ENCODE measurements at regions of chr17 and their contacts with region 1.

Region 1: DNA sequence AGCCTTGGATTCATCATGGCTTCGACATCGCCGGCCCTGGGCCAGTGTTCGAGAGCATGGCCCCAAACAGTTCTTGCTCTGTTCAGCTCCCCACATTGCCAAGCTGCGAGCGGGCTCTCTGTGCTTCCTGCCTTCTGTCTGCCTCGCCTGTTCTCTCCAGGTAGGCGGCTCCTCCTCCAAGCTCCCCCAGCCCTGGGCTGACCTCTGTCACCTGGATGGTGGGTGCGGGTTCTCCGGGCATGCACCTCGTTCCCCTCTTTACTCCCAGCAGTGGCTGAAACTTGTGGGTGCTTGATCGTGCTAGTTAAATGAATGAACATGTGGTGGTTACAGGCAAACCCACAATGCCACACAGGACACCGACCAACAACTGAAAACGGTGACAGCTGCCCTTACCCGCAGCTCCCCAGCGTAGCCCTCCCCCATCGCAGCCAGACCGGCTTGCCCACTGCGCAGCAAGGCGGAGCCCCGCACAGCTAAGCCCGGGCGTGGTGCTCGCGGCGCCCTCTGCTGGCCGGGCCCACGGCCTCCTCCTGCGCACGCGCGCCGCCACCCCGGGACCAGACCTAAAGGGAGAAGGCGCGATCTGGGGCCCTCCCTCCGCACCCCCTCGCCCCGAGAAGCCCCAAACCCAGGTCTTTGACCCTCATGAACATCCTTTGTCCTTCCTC is 23.0 kb upstream of the EIF1 start:
- DNase-seq: peak; percentile 96
- H3K4me3 ChIP-seq: peak overlapping the region; percentile 44 to 58
- H3K27ac ChIP-seq: peak overlapping the region; percentile 49 to 77
- H3K4me1 ChIP-seq: peaks cover 4 to 14% of the 10 kb centered on the region in 2 experiments; a peak in 2 of 4 replicates
- H3K27me3 ChIP-seq: no peaks in the 10 kb centered on the region; the same call in 1 of the 2 replicates
- CTCF ChIP-seq: peak; percentile 89
- EP300 ChIP-seq: no peak
- RAD21 ChIP-seq: peak; percentile 29; the same call in 1 of the 2 replicates

Region 2: DNA sequence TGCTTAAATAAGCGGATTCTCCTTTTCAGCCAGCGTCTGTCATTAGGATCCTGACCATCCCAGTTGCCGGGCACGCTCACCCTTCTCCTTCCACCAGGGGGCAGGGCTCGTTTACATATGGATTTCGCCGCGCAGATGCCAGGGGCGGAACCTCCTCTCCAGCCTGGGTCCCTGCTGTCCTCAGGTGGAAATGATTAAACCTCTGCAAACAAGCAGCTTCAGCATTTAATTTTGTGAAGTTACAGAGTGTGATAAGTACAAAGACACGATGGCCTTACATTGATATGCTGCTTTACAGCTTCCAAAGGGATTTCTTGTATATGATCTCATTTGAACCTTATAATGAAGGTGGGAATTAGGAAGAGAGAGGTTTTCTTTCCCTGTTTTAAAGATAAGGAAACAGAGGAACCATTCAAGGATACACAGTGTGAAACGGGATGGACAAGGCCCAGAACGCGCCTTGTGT is 862.1 kb before region 1 on chr17:
- CTCF ChIA-PET with region 1: interaction called, 44 read pairs
- POLR2A ChIA-PET with region 1: no interaction called
- DNase-seq: peak; percentile 86
- H3K4me3 ChIP-seq: no peak overlapping the region; a peak in 1 of 4 replicates
- H3K27ac ChIP-seq: no peak overlapping the region
- H3K4me1 ChIP-seq: peaks cover 0 to 2% of the 10 kb centered on the region in 2 experiments; a peak in 1 of 4 replicates
- H3K27me3 ChIP-seq: peaks cover 52% of the 10 kb centered on the region
- CTCF ChIP-seq: peak; percentile 94
- EP300 ChIP-seq: no peak
- RAD21 ChIP-seq: peak; percentile 89

Region 3: DNA sequence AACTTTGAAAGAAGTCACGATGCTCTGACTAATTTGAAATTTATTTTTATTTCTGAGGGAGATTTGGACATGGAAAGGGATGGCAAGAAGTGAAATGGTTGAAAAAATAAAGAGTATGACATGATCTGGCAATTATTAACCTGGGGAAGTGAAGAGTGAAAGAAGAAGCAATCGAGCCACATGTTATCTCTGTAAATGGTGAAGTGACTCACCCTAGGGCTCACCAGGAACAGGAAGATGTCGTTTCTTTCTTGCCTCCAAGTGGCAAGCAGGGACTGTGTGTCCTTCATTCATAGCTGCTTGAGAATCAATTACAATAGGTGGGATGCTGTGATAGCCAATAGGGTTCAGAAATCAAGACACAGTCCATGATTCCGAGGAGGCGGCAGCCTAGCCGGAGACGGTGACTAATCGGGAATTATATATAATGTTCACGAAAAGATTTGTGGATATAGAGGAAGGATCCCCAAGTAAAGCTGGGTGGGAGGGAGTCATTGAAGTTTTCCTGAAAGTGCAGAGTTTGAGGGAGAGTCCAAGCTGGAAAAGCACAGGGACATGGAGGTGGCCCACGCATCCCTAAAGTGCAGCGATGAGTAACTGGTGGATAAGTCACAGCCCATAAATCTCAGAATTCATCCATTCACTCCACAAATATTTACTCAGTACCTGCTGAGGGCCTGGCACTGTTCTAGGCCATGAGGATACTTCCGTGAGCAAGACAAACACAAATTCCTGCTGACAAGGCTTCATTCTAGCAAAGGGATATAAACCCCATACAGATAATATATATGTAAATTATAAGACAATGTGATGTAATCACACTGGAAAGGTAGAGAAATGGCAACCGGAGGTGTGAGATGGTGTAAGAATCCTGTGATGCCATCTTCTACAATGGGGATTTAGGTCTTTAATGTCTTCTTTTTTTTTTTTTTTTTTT is 762.3 kb before region 1 on chr17:
- CTCF ChIA-PET with region 1: interaction called, 42 read pairs
- POLR2A ChIA-PET with region 1: no interaction called
- DNase-seq: no peak
- H3K4me3 ChIP-seq: peak overlapping the region in 1 of 2 experiments; percentile 56; a peak in 2 of 4 replicates
- H3K27ac ChIP-seq: peak overlapping the region in 1 of 2 experiments; percentile 40; a peak in 1 of 4 replicates
- H3K4me1 ChIP-seq: peaks cover 0 to 14% of the 10 kb centered on the region in 2 experiments; a peak in 2 of 4 replicates
- H3K27me3 ChIP-seq: peaks cover 37% of the 10 kb centered on the region; the same call in 1 of the 2 replicates
- CTCF ChIP-seq: no peak
- EP300 ChIP-seq: no peak
- RAD21 ChIP-seq: no peak

Region 4: GRCh38 chr17:41329281-41329948 is 336.3 kb before region 1 on chr17:
- CTCF ChIA-PET with region 1: interaction called, 17 read pairs
- POLR2A ChIA-PET with region 1: no interaction called
- DNase-seq: peak; percentile 70
- H3K4me3 ChIP-seq: no peak overlapping the region
- H3K27ac ChIP-seq: no peak overlapping the region
- H3K4me1 ChIP-seq: no peaks in the 10 kb centered on the region
- H3K27me3 ChIP-seq: no peaks in the 10 kb centered on the region
- CTCF ChIP-seq: peak; percentile 70
- EP300 ChIP-seq: no peak
- RAD21 ChIP-seq: peak; percentile 65

Region 5: GRCh38 chr17:41567317-41567716 is 98.4 kb before region 1 on chr17:
- CTCF ChIA-PET with region 1: interaction called, 18 read pairs
- POLR2A ChIA-PET with region 1: no interaction called
- DNase-seq: no peak
- H3K4me3 ChIP-seq: no peak overlapping the region
- H3K27ac ChIP-seq: no peak overlapping the region
- H3K4me1 ChIP-seq: no peaks in the 10 kb centered on the region
- H3K27me3 ChIP-seq: peaks cover 35% of the 10 kb centered on the region; the same call in 1 of the 2 replicates
- CTCF ChIP-seq: no peak
- EP300 ChIP-seq: no peak
- RAD21 ChIP-seq: no peak

Region 6: GRCh38 chr17:41602524-41602923 is 63.2 kb before region 1 on chr17:
- CTCF ChIA-PET with region 1: interaction called, 13 read pairs
- POLR2A ChIA-PET with region 1: no interaction called
- DNase-seq: no peak
- H3K4me3 ChIP-seq: no peak overlapping the region
- H3K27ac ChIP-seq: no peak overlapping the region
- H3K4me1 ChIP-seq: peaks cover 0 to 3% of the 10 kb centered on the region in 2 experiments; a peak in 1 of 4 replicates
- H3K27me3 ChIP-seq: peaks cover 16% of the 10 kb centered on the region
- CTCF ChIP-seq: no peak
- EP300 ChIP-seq: no peak
- RAD21 ChIP-seq: no peak

Region 7: GRCh38 chr17:41695954-41696756 is 30.5 kb after region 1 on chr17:
- CTCF ChIA-PET with region 1: interaction called, 235 read pairs
- POLR2A ChIA-PET with region 1: interaction called, 4 read pairs
- DNase-seq: peak; percentile 73
- H3K4me3 ChIP-seq: peak overlapping the region in 1 of 2 experiments; percentile 4; a peak in 1 of 4 replicates
- H3K27ac ChIP-seq: no peak overlapping the region
- H3K4me1 ChIP-seq: peaks cover under 1 to 2% of the 10 kb centered on the region in 2 experiments; a peak in 2 of 4 replicates
- H3K27me3 ChIP-seq: no peaks in the 10 kb centered on the region
- CTCF ChIP-seq: peak; percentile 90
- EP300 ChIP-seq: no peak
- RAD21 ChIP-seq: peak; percentile 52

Region 8: DNA sequence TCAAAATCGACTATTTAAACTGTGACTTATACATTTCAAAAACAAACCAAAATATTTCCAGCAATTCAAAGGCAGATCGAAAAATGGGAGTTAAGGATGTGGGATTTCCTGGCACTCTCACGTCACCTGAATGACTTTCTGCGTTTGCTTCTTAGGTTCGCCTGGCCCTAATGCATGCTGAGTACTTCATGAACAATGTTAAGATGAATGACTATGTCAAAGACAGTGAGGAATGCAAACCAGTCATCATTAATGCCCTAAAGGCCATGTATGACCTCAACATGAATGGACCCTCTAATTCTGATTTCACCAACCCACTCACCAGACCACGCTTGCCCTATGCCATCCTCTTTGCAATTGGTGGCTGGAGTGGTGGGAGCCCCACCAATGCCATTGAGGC is 179.3 kb after region 1 on chr17:
- CTCF ChIA-PET with region 1: no interaction called
- POLR2A ChIA-PET with region 1: no interaction called
- DNase-seq: no peak
- H3K4me3 ChIP-seq: no peak overlapping the region
- H3K27ac ChIP-seq: no peak overlapping the region
- H3K4me1 ChIP-seq: no peaks in the 10 kb centered on the region
- H3K27me3 ChIP-seq: no peaks in the 10 kb centered on the region
- CTCF ChIP-seq: no peak
- EP300 ChIP-seq: no peak
- RAD21 ChIP-seq: no peak